IMR-90 (cell line): ENCODE measurements at regions of chr15 and their contacts with region 1.

Region 1: GRCh38 chr15:66946578-66947164 is 118.7 kb upstream of the SMAD3 start:
- DNase-seq: peak; percentile 70
- ATAC-seq: peak; percentile 79
- H3K4me3 ChIP-seq: no peak overlapping the region
- H3K27ac ChIP-seq: no peak overlapping the region
- H3K4me1 ChIP-seq: no peaks in the 10 kb centered on the region; the same call in none of the 2 replicates
- H3K27me3 ChIP-seq: no peaks in the 10 kb centered on the region
- CTCF ChIP-seq: peak; percentile 93
- POLR2A ChIP-seq: peak; percentile 48; the same call in 1 of the 2 replicates
- RAD21 ChIP-seq: peak; percentile 98

Region 2: DNA sequence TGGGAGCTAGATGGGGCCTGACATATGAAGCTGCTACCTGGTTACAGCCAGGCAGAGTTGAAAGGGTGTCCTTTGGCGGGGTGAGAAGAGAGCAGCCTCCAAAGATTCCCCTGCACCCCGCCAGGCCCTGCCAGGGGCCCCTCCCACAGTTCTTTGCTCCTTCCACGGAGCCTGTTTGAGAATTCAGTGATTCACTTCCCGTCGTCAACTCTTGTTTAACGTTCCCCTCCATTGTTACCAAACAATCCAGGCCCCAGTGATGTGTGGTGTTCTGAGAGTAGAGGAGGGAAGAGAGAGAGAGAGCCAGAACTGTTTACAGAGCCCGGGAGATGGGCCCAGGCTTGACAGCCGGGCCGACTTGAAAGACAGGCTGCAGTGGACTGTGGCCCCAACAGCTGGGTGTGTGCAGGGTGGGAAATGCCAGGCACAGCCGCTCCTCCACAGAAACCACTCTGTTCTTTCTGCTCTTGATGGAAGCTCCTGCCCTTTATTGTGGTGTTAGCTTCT is 200.3 kb after region 1 on chr15:
- CTCF ChIA-PET with region 1: no interaction called
- POLR2A ChIA-PET with region 1: no interaction called
- dilution Hi-C with region 1: no loop called
- in situ Hi-C with region 1: no loop called
- intact Hi-C with region 1: loop called (anchors 10 kb)
- DNase-seq: peak; percentile 96
- ATAC-seq: peak; percentile 48
- H3K4me3 ChIP-seq: no peak overlapping the region
- H3K27ac ChIP-seq: peak overlapping the region; percentile 93
- H3K4me1 ChIP-seq: peaks cover 58% of the 10 kb centered on the region
- H3K27me3 ChIP-seq: no peaks in the 10 kb centered on the region
- CTCF ChIP-seq: no peak
- POLR2A ChIP-seq: peak; percentile 86; the same call in 1 of the 2 replicates
- RAD21 ChIP-seq: peak; percentile 23; the same call in 1 of the 2 replicates

Region 3: GRCh38 chr15:67254238-67255175 is 307.8 kb after region 1 on chr15 and contains the starts of genes AAGAB and IQCH:
- CTCF ChIA-PET with region 1: interaction called, 3 read pairs
- POLR2A ChIA-PET with region 1: no interaction called
- dilution Hi-C with region 1: no loop called
- in situ Hi-C with region 1: no loop called
- intact Hi-C with region 1: loop called (anchors 2 kb)
- DNase-seq: peak; percentile 98
- ATAC-seq: peak; percentile 100
- H3K4me3 ChIP-seq: peak within 1 kb of the TSS; percentile 57
- H3K27ac ChIP-seq: peak within 1 kb of the TSS; percentile 83
- H3K4me1 ChIP-seq: peaks cover 2% of the 10 kb centered on the region; the same call in 1 of the 2 replicates
- H3K27me3 ChIP-seq: no peaks in the 10 kb centered on the region
- CTCF ChIP-seq: no peak
- POLR2A ChIP-seq: peak; percentile 93
- RAD21 ChIP-seq: no peak
- total RNA-seq, gene AAGAB: 56.7 and 69.7 TPM in 2 replicates
- total RNA-seq, gene IQCH: 2.5 and 2.8 TPM in 2 replicates

Region 4: DNA sequence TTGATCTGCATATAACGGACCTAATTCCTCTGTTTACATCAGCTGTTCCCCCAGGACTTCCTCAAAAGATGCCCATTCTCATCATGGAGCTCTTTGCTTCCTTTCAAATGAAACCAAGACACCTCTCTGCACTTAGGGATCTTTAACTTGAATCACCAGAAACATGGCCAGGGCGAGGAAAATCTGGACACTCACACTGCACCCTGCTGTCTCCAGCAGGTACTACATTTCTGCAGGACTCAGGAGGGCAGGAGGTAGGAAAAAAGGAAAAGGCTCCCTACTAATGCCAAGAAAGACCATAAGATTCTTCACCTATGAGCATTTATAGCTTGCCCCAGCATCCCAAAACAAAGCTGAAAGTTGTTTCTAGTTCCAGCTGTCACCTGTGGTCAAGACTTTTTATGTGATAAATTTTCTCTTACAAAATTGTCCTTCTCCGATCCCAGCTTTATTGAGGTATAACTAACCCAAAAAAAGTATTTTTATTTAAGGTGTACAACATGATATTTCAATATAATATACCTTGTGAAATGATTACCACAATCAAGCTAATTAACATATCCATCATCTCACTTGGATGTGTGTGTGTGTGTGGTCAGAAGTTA is 486.9 kb after region 1 on chr15:
- CTCF ChIA-PET with region 1: interaction called, 7 read pairs
- POLR2A ChIA-PET with region 1: no interaction called
- dilution Hi-C with region 1: no loop called
- in situ Hi-C with region 1: loop called (anchors 5 kb)
- intact Hi-C with region 1: loop called (anchors 1 kb)
- DNase-seq: peak; percentile 59
- ATAC-seq: peak; percentile 99
- H3K4me3 ChIP-seq: no peak overlapping the region
- H3K27ac ChIP-seq: no peak overlapping the region
- H3K4me1 ChIP-seq: no peaks in the 10 kb centered on the region
- H3K27me3 ChIP-seq: no peaks in the 10 kb centered on the region
- CTCF ChIP-seq: peak; percentile 77
- POLR2A ChIP-seq: no peak
- RAD21 ChIP-seq: peak; percentile 79